Activated CD8-positive, alpha-beta T cell treated with anti-CD3 and anti-CD28 coated beads, Interleukin-2, amount 10 ng/mL, durations not matched to agents 7 days and 5 days (primary cell): ENCODE measurements at regions of chr22 and their contacts with region 1.

Region 1: GRCh38 chr22:30104501-30105156 is 24.4 kb downstream of the HORMAD2 start:
- DNase-seq: peak; percentile 47
- ATAC-seq: peak; percentile 74
- H3K4me3 Mint-ChIP-seq: peak overlapping the region; percentile 51
- H3K27ac Mint-ChIP-seq: peak overlapping the region; percentile 83
- H3K4me1 Mint-ChIP-seq: peaks cover 76% of the 10 kb centered on the region
- H3K27me3 Mint-ChIP-seq: no peaks in the 10 kb centered on the region

Region 2: GRCh38 chr22:30089655-30089974 is 15.0 kb before region 1 on chr22:
- CTCF ChIA-PET with region 1: interaction called, 10 read pairs
- POLR2A ChIA-PET with region 1: no interaction called
- DNase-seq: no peak
- ATAC-seq: no peak
- H3K4me3 Mint-ChIP-seq: no peak overlapping the region
- H3K27ac Mint-ChIP-seq: no peak overlapping the region
- H3K4me1 Mint-ChIP-seq: peaks cover 22% of the 10 kb centered on the region
- H3K27me3 Mint-ChIP-seq: peaks cover 2% of the 10 kb centered on the region

Region 3: DNA sequence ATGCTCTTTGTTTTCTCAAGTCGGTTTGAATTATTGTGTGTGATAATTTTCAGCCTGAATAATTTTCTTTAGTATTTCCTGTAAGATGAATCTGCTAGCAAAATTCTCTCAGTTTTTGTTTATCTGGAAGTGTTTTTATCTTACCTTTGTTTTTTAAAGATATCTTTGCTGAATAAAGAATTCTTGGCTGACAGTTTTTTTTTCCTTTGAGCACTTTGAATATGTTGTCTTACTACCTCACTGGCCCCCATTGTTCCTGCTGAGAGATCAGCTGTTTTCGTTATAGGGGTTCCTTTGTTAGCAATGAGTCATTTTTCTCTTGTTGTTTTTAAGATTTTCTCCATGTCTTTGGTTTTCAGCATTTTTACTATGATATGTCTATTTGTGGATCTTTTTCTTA is 38.6 kb after region 1 on chr22:
- CTCF ChIA-PET with region 1: no interaction called
- POLR2A ChIA-PET with region 1: no interaction called
- DNase-seq: no peak
- ATAC-seq: no peak
- H3K4me3 Mint-ChIP-seq: no peak overlapping the region
- H3K27ac Mint-ChIP-seq: no peak overlapping the region
- H3K4me1 Mint-ChIP-seq: no peaks in the 10 kb centered on the region
- H3K27me3 Mint-ChIP-seq: no peaks in the 10 kb centered on the region

Region 4: GRCh38 chr22:30159561-30160353 is 55.1 kb after region 1 on chr22:
- CTCF ChIA-PET with region 1: interaction called, 13 read pairs
- POLR2A ChIA-PET with region 1: no interaction called
- DNase-seq: no peak
- ATAC-seq: peak; percentile 24
- H3K4me3 Mint-ChIP-seq: no peak overlapping the region
- H3K27ac Mint-ChIP-seq: peak overlapping the region; percentile 88
- H3K4me1 Mint-ChIP-seq: peaks cover 54% of the 10 kb centered on the region
- H3K27me3 Mint-ChIP-seq: no peaks in the 10 kb centered on the region

Region 5: GRCh38 chr22:30183861-30184278 is 79.2 kb after region 1 on chr22:
- CTCF ChIA-PET with region 1: interaction called, 73 read pairs
- POLR2A ChIA-PET with region 1: interaction called, 3 read pairs
- DNase-seq: peak; percentile 64
- ATAC-seq: peak; percentile 70
- H3K4me3 Mint-ChIP-seq: peak overlapping the region; percentile 55
- H3K27ac Mint-ChIP-seq: peak overlapping the region; percentile 96
- H3K4me1 Mint-ChIP-seq: peaks cover 94% of the 10 kb centered on the region
- H3K27me3 Mint-ChIP-seq: no peaks in the 10 kb centered on the region

Region 6: GRCh38 chr22:30238661-30239420 is 134.2 kb after region 1 on chr22:
- CTCF ChIA-PET with region 1: interaction called, 22 read pairs
- POLR2A ChIA-PET with region 1: interaction called, 4 read pairs
- DNase-seq: peak; percentile 65
- ATAC-seq: peak; percentile 42
- H3K4me3 Mint-ChIP-seq: peak overlapping the region; percentile 51
- H3K27ac Mint-ChIP-seq: peak overlapping the region; percentile 79
- H3K4me1 Mint-ChIP-seq: peaks cover 89% of the 10 kb centered on the region
- H3K27me3 Mint-ChIP-seq: no peaks in the 10 kb centered on the region

Region 7: GRCh38 chr22:30253205-30253852 is 148.7 kb after region 1 on chr22:
- CTCF ChIA-PET with region 1: interaction called, 95 read pairs
- POLR2A ChIA-PET with region 1: interaction called, 4 read pairs
- DNase-seq: no peak
- ATAC-seq: no peak
- H3K4me3 Mint-ChIP-seq: peak overlapping the region; percentile 12
- H3K27ac Mint-ChIP-seq: peak overlapping the region; percentile 76
- H3K4me1 Mint-ChIP-seq: peaks cover 93% of the 10 kb centered on the region
- H3K27me3 Mint-ChIP-seq: no peaks in the 10 kb centered on the region

Region 8: GRCh38 chr22:30277547-30278344 is 173.1 kb after region 1 on chr22:
- CTCF ChIA-PET with region 1: interaction called, 11 read pairs
- POLR2A ChIA-PET with region 1: no interaction called
- DNase-seq: no peak
- ATAC-seq: no peak
- H3K4me3 Mint-ChIP-seq: no peak overlapping the region
- H3K27ac Mint-ChIP-seq: peak overlapping the region; percentile 48
- H3K4me1 Mint-ChIP-seq: peaks cover 66% of the 10 kb centered on the region
- H3K27me3 Mint-ChIP-seq: peaks cover 1% of the 10 kb centered on the region